PC-9 (cell line): ENCODE measurements at regions of chr17 and their contacts with region 1.

Region 1: DNA sequence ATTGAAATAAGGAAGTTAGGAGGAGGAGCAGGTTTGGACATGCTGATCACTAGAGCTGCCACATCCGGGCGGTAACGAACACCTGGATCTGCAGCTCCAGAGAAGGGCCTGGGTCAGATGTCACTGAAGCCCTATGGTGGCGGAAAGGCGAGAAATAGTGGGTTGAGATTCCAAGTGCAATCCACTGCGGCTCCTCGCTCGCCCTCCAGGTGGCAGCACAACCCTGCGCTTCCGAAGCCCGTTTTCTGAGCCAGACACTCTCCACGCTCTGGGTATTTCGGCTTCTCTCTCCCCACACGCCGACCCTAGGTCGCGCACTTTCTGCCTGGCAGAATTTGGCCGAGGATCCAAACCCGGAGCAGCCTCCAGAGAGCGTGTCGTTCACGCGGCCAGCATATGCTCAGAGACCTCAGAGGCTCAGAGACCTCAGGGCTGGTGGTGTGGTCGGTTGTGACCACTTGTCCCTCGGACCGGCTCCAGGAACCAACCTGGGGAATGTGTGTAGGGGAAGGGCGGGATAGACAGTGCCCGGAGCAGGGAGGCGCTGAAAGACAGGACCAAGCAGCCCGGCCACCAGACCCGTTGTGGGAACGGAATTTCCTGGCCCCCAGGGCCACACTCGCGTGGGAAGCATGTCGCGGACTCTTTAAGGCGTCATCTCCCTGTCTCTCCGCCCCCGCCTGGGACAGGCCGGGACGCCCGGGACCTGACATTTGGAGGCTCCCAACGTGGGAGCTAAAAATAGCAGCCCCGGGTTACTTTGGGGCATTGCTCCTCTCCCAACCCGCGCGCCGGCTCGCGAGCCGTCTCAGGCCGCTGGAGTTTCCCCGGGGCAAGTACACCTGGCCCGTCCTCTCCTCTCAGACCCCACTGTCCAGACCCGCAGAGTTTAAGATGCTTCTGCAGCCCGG is 744 bp upstream of the SLC2A4 start:
- DNase-seq: peak; percentile 74 to 91
- H3K4me3 ChIP-seq: peak overlapping the region; percentile 55
- H3K27ac ChIP-seq: peak overlapping the region; percentile 62
- H3K4me1 ChIP-seq: 0 out of 2 replicates have a peak, but pooled peaks cover 4% of the 10 kb centered on the region
- H3K27me3 ChIP-seq: no peaks in the 10 kb centered on the region
- CTCF ChIP-seq: peak; percentile 96

Region 2: DNA sequence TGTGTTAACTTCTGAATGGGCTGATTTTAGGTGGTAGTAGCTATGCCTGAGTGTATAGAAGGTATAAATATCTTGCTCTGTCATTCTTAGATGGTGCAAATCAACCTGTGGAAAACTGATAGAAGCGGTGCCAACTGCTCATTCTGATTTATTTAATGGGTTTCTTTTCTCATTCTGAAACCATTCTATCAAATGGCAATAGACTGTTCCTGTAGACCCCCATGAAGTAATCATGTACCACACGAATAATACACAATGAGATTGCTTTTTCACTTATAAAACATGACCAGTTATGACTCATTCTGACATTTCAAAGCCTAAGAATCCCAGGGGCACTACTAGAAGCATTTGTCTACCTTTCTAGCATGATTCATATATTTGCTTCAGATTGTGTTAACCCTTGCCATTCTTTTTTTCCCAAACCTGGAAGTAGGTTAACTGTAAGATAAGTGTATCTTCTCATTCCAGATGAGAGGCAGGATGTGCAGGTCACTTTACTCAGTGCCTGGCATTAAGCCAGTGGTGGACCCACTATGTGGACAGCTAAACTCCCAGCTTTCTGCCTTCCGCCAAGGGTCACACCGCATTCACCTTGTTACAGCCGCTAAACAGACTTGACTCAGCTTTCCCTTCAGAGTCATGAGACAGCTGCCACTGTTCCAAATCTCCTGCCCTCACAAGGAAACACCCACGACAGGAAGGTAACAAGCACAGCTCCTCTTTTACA is 220.4 kb before region 1 on chr17:
- CTCF ChIA-PET with region 1: no interaction called
- POLR2A ChIA-PET with region 1: interaction called, 18 read pairs
- intact Hi-C with region 1: no loop called
- DNase-seq: peak; percentile 73 to 94
- H3K4me3 ChIP-seq: no peak overlapping the region; the same call in 1 of the 2 replicates
- H3K27ac ChIP-seq: peak overlapping the region; percentile 93
- H3K4me1 ChIP-seq: peaks cover 36% of the 10 kb centered on the region
- H3K27me3 ChIP-seq: no peaks in the 10 kb centered on the region
- CTCF ChIP-seq: no peak

Region 3: DNA sequence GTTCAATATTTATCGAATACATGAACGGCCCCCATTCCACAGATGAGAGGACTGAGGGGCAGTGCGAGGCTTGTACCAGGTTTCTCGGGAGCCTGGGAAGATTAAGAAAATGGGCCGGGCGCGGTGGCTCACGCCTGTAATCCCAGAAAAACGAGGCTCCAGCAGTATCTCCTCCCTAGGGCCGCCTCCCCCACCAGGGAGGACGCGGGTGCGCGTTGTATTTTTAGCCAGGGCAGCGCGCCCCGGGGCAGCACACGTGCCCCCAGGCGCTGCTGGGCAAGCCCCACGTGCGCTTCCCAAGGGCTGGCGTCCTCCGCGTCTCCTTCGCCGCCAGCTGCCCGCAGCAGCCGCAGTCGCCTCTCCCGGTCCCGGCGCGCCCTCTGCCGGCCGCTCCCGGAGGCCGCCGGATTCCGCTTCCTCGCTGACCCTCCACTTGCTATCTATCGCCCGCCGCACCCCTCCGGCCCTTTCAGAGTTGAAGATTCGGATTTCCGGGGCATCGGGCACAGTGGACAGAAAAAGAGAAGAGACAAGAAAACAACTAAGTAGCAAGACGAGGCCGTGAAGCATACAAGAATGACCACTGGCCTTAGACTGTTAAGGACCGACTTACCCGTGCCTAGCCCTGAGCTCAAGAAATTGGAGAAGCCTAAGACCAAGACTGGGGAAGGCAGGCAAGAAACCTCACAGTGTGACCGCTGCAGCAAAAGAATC is 15.6 kb after region 1 on chr17:
- CTCF ChIA-PET with region 1: interaction called, 3 read pairs
- POLR2A ChIA-PET with region 1: no interaction called
- intact Hi-C with region 1: loop called (anchors 1 kb)
- DNase-seq: peak; percentile 61 to 90
- H3K4me3 ChIP-seq: peak overlapping the region; percentile 36
- H3K27ac ChIP-seq: no peak overlapping the region
- H3K4me1 ChIP-seq: peaks cover 25% of the 10 kb centered on the region
- H3K27me3 ChIP-seq: no peaks in the 10 kb centered on the region
- CTCF ChIP-seq: peak; percentile 95